ENCODE measurements at regions of chr18 and their contacts with region 1.

Region 1: DNA sequence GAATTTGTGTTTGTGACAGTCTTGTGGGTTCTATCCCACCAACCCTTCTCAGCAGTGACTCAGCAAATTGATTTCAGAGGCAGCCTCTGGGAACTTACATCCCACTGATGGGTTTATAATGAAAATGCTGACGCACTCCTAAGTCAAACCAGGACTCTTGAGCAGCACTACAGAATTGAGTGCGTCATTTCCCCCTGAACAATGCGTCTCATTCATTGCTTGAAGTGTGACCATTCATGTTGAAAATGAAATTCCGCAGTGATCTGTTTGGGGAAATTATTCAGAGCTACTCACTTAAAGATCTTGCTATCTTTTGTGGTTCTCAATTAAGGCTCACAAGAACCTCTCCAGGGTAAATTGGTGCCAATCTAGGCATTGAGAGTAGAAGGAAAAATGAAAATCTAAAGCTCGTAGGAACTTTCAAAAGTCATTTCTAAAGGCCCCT is 417.7 kb upstream of the SLC14A2 start:
- DNase-seq: no peak
- ATAC-seq: no peak
- H3K4me3 ChIP-seq: no peak overlapping the region
- H3K27ac ChIP-seq: no peak overlapping the region
- H3K4me1 ChIP-seq: no peaks in the 10 kb centered on the region
- H3K27me3 ChIP-seq: no peaks in the 10 kb centered on the region
- CTCF ChIP-seq: no peak
- POLR2A ChIP-seq: no peak

Region 2: DNA sequence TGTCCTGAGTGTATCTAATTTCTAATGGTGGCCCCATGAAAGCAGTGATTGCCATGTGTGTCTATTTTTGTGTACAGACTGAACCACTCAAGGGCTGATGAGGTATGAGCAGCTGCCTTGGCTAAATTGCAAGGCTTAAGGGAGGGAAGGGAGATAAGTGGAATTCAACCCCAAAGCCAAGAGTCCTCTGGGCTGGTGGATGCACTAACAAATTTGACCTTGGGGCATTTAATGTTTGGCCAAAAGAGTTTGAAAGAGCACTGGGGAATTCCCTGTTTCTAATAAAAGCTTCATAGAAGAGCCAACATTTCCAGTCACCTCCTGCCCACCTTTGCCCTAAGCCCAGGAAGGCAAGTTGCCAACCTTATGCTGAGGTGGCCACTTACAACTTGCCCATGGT is 344.7 kb before region 1 on chr18:
- in situ Hi-C with region 1: no loop called
- intact Hi-C with region 1: no loop called
- DNase-seq: peak; percentile 11 to 49
- ATAC-seq: peak; percentile 81 to 96
- H3K4me3 ChIP-seq: no peak overlapping the region
- H3K27ac ChIP-seq: peak overlapping the region; percentile 56 to 73 (median 69)
- H3K4me1 ChIP-seq: peaks cover 41 to 48% of the 10 kb centered on the region in 2 donors
- H3K27me3 ChIP-seq: no peaks in the 10 kb centered on the region
- CTCF ChIP-seq: no peak
- POLR2A ChIP-seq: no peak

Region 3: DNA sequence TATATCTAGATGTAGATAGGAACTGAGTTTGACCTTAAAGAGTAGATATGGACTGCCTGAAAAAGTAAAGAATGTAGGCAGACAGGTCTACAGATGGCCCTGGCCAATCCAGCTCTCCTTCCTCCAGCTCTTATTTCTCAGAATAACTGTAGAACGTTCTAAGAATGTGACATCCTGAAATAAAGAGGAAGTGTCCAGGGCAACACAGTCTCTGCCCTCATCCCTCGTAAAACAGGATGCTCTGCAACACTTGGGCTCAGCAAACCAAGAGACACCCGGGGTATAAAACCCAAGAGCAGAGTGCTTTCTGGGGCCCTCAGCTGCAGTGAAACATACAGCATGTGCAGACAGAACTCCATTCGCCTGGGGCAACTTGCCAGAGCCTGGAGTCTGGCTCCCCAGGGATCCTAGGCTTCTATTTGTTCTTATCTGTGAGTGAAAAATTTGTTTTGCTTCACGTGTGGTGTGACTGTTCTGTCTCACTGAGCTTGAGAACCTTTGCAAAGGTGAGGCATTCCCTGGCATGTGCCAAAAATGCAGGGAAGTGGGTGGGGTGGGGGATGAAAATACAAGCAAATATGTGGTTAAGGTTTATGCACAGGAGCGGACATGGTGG is 115.9 kb before region 1 on chr18:
- in situ Hi-C with region 1: loop called in 1 of 4 experiments (anchors 25 kb)
- intact Hi-C with region 1: no loop called
- DNase-seq: no peak
- ATAC-seq: no peak
- H3K4me3 ChIP-seq: no peak overlapping the region
- H3K27ac ChIP-seq: no peak overlapping the region
- H3K4me1 ChIP-seq: no peaks in the 10 kb centered on the region
- H3K27me3 ChIP-seq: no peaks in the 10 kb centered on the region
- CTCF ChIP-seq: no peak
- POLR2A ChIP-seq: no peak

Region 4: DNA sequence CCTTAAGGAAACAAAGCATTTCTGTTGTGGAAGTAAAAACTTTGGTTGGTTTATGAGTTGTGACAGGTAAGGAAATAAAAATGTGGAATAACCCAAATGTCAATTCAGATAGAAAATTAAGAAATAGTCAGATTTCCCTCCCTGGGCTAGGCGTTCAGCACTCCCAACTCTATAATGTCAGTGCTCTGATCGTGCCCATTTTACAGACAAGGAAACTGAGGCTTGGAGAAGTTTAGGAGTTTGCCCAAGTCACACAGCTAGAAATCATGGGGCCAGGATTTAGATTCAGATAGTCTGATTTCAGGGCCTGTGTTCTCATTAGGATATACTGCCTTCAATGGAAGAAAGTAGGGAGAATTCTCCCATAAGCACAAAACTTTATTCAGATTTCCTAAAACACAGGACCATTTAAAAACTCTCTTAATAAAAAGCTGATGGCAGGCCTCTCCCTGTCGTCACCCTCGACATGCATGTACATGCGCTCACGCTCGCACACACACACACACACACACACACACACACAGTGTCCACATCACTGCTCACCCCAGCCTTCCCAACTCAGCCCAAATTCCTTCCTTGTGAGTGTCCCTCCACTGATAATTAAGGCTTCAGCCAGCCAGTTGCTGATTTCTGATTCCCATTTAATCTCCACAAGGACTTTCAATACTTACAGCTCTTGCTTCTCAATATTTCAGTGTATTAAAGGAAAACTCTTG is 368.6 kb after region 1 on chr18:
- in situ Hi-C with region 1: no loop called
- intact Hi-C with region 1: no loop called
- DNase-seq: peak in 1 of 2 donors; percentile 23
- ATAC-seq: peak in 1 of 2 donors; percentile 44
- H3K4me3 ChIP-seq: no peak overlapping the region
- H3K27ac ChIP-seq: peak overlapping the region in 1 of 4 donors; percentile 25
- H3K4me1 ChIP-seq: peaks cover 0 to 5% of the 10 kb centered on the region in 2 donors
- H3K27me3 ChIP-seq: no peaks in the 10 kb centered on the region
- CTCF ChIP-seq: no peak
- POLR2A ChIP-seq: no peak

Region 5: DNA sequence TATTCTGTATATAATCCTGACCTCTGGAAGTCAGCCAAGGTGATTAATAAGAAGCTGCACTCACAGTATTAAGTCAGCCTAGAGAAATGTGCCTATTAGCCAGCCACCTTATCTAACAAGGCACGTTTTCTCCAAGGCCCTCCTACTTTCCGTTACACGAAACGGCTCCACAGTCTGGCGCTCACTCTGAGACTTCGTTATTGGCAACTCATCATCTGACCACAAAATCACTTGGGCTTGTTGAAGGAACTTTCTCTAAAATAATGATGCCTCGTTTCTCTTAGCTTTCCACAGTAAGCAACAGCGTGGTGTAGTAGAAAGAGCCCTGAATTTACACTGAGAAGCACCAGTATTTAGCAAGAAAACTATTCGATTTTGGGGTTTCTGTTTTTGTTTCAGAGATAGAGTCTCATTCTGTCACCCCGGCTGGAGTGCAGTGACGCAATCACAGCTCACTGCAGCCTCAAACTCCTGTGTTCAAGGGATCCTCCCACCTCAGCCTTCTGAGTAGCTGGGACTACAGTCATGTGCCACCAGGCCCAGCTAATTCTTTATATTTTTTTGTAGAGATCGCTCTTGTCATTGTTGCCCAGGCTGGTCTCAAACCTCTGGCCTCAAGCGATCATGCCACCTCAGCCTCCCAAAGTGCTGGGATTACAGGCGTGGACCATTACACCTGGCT is 472.9 kb after region 1 on chr18:
- in situ Hi-C with region 1: no loop called
- intact Hi-C with region 1: no loop called
- DNase-seq: no peak
- ATAC-seq: peak; percentile 16 to 34
- H3K4me3 ChIP-seq: no peak overlapping the region
- H3K27ac ChIP-seq: no peak overlapping the region
- H3K4me1 ChIP-seq: peaks cover 10 to 13% of the 10 kb centered on the region in 2 donors
- H3K27me3 ChIP-seq: no peaks in the 10 kb centered on the region
- CTCF ChIP-seq: no peak
- POLR2A ChIP-seq: no peak

Measured in gastrocnemius medialis (tissue), 4 donors.